PC-3 (cell line): ENCODE measurements at regions of chr5 and their contacts with region 1.

Region 1: DNA sequence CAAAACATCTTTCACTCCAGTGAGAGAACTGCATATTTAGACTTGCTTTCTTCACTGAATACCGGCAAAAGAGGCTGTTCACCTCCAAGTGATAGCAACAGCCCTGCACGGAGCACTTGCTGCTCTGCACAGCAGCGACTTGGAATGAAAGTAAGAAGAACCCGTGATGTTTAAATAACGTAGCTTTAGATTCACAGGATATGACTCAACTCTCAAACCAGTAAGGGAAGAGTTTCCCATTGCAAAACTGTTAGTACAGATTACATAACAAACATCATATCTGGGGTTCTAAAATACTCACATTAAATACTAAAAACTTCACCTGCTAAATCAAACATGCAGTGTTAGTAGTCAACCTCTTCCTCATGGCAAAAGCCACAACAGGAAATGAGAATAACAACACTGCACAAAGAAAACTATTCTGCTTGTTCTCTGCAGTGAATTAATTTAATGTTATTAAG is 203.4 kb downstream of the MCTP1 start:
- DNase-seq: peak; percentile 83
- ATAC-seq: peak; percentile 79
- H3K4me3 ChIP-seq: peak overlapping the region; percentile 77
- H3K27ac ChIP-seq: peak overlapping the region; percentile 82
- H3K4me1 ChIP-seq: peaks cover 35% of the 10 kb centered on the region
- H3K27me3 ChIP-seq: no peaks in the 10 kb centered on the region
- CTCF ChIP-seq: no peak

Region 2: GRCh38 chr5:95107138-95107537 is 25.6 kb after region 1 on chr5:
- CTCF ChIA-PET with region 1: no interaction called
- POLR2A ChIA-PET with region 1: no interaction called
- intact Hi-C with region 1: loop called (anchors 2 kb)
- DNase-seq: peak; percentile 79
- ATAC-seq: peak; percentile 87
- H3K4me3 ChIP-seq: no peak overlapping the region; the same call in 1 of the 2 replicates
- H3K27ac ChIP-seq: peak overlapping the region; percentile 90
- H3K4me1 ChIP-seq: peaks cover 22% of the 10 kb centered on the region
- H3K27me3 ChIP-seq: no peaks in the 10 kb centered on the region
- CTCF ChIP-seq: no peak

Region 3: GRCh38 chr5:95191330-95191729 is 109.8 kb after region 1 on chr5:
- CTCF ChIA-PET with region 1: no interaction called
- POLR2A ChIA-PET with region 1: no interaction called
- intact Hi-C with region 1: no loop called
- DNase-seq: no peak
- ATAC-seq: no peak
- H3K4me3 ChIP-seq: no peak overlapping the region
- H3K27ac ChIP-seq: no peak overlapping the region
- H3K4me1 ChIP-seq: no peaks in the 10 kb centered on the region
- H3K27me3 ChIP-seq: no peaks in the 10 kb centered on the region
- CTCF ChIP-seq: no peak

Region 4: GRCh38 chr5:95238560-95239325 is 157.2 kb after region 1 on chr5:
- CTCF ChIA-PET with region 1: interaction called, 4 read pairs
- POLR2A ChIA-PET with region 1: no interaction called
- intact Hi-C with region 1: loop called (anchors 2 kb)
- DNase-seq: peak; percentile 54
- ATAC-seq: peak; percentile 83
- H3K4me3 ChIP-seq: no peak overlapping the region
- H3K27ac ChIP-seq: no peak overlapping the region
- H3K4me1 ChIP-seq: 0 out of 2 replicates have a peak, but pooled peaks cover 4% of the 10 kb centered on the region
- H3K27me3 ChIP-seq: no peaks in the 10 kb centered on the region
- CTCF ChIP-seq: peak; percentile 59

Region 5: DNA sequence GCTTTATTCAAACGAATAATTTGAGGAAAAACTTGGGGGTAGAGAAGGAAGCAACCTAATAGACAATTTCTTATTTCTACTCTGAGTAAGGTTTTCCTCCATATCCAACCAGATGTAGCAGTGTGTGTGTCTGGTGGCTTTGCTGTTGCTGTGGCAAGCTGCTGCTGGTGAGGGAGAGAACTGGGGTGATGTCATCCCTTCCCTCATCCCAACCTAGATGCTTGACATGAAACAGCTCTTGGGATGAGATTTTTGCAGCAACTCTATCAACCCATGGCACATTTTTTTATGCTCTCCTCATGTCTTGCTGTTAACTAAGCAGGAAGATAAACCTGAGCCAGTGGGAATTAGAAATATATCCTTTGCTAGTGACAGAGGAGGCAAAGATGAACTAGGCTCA is 1215.8 kb after region 1 on chr5:
- CTCF ChIA-PET with region 1: no interaction called
- POLR2A ChIA-PET with region 1: no interaction called
- intact Hi-C with region 1: no loop called
- DNase-seq: no peak
- ATAC-seq: no peak
- H3K4me3 ChIP-seq: no peak overlapping the region
- H3K27ac ChIP-seq: no peak overlapping the region
- H3K4me1 ChIP-seq: peaks cover 10% of the 10 kb centered on the region
- H3K27me3 ChIP-seq: no peaks in the 10 kb centered on the region
- CTCF ChIP-seq: no peak